Naive thymus-derived CD4-positive, alpha-beta T cell (primary cell): ENCODE measurements at regions of chr9 and their contacts with region 1.

Region 1: GRCh38 chr9:89549031-89549644 is 51.2 kb upstream of the SEMA4D start:
- DNase-seq: peak; percentile 70 to 87 (median 81)
- ATAC-seq: peak; percentile 100
- H3K4me3 ChIP-seq: no peak overlapping the region
- H3K4me3 Mint-ChIP-seq: peak overlapping the region in 7 of 10 donors; percentile 18 to 66 (median 55)
- H3K27ac ChIP-seq: peak overlapping the region; percentile 38
- H3K27ac Mint-ChIP-seq: peak overlapping the region in 7 of 9 donors; percentile 27 to 88 (median 74)
- H3K4me1 ChIP-seq: peaks cover 11 to 22% of the 10 kb centered on the region in 2 donors
- H3K4me1 Mint-ChIP-seq: peaks cover 13 to 42% (median 31%) of the 10 kb centered on the region in 7 donors
- H3K27me3 ChIP-seq: no peaks in the 10 kb centered on the region
- H3K27me3 Mint-ChIP-seq: peaks cover 0 to 21% (median 0%) of the 10 kb centered on the region in 5 donors

Region 2: DNA sequence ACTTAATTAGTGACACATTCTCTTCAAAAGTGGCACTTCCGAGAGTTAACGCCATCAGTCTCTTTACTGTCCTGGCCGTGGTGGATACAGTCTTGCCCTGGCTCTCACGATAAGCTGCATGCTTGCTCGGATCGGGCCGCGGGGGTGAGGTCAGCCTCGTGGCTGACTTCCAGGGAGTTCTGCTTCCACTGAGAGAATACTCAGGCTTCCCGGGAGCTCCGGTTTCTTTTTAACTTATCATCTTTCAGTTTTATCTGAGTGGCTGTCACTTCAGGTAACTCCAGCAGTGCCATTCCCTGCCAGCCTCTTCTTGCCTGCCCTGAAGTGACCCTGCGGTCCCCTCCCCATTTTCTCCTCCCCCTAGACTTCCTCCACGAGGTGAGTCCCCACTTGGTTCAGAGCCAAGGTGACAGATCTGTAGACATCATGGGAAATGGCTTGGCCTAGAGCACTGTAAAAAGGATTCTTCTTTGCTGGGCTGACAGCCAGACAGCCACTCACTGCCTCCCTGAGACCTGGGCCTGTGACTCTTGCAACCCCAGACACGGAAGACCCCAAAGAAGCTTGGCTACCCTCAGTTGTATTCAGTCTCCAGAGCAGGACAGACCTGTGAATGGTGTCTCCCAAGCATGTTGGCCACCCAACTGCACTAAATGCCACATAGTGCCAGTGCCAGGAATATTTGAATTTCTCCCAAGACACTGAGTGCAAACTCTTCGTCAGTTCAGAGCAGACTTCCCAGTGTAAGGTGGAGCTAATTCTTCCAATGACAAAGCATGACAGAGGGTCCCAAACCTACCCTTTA is 1956.4 kb before region 1 on chr9:
- CTCF ChIA-PET with region 1: no interaction called
- POLR2A ChIA-PET with region 1: no interaction called
- intact Hi-C with region 1: no loop called
- DNase-seq: no peak
- ATAC-seq: no peak
- H3K4me3 ChIP-seq: no peak overlapping the region
- H3K4me3 Mint-ChIP-seq: no peak overlapping the region
- H3K27ac ChIP-seq: no peak overlapping the region
- H3K27ac Mint-ChIP-seq: no peak overlapping the region
- H3K4me1 ChIP-seq: no peaks in the 10 kb centered on the region
- H3K4me1 Mint-ChIP-seq: peaks cover 0 to 2% (median 0%) of the 10 kb centered on the region in 7 donors
- H3K27me3 ChIP-seq: no peaks in the 10 kb centered on the region
- H3K27me3 Mint-ChIP-seq: peaks cover 0 to 9% (median 2%) of the 10 kb centered on the region in 5 donors

Region 3: GRCh38 chr9:89410641-89411350 is 138.3 kb before region 1 on chr9:
- CTCF ChIA-PET with region 1: interaction called, 19 read pairs
- POLR2A ChIA-PET with region 1: interaction called, 18 read pairs
- intact Hi-C with region 1: loop called (anchors 1 kb)
- DNase-seq: peak in 2 of 9 donors; percentile 29 to 60
- ATAC-seq: peak; percentile 37
- H3K4me3 ChIP-seq: no peak overlapping the region
- H3K4me3 Mint-ChIP-seq: peak overlapping the region in 9 of 10 donors; percentile 7 to 85 (median 54)
- H3K27ac ChIP-seq: peak overlapping the region; percentile 20
- H3K27ac Mint-ChIP-seq: peak overlapping the region; percentile 67 to 93 (median 84)
- H3K4me1 ChIP-seq: peaks cover 57 to 62% of the 10 kb centered on the region in 2 donors
- H3K4me1 Mint-ChIP-seq: peaks cover 56 to 100% (median 93%) of the 10 kb centered on the region in 7 donors
- H3K27me3 ChIP-seq: no peaks in the 10 kb centered on the region
- H3K27me3 Mint-ChIP-seq: no peaks in the 10 kb centered on the region

Region 4: GRCh38 chr9:89449261-89449671 is 99.9 kb before region 1 on chr9:
- CTCF ChIA-PET with region 1: interaction called, 12 read pairs
- POLR2A ChIA-PET with region 1: interaction called, 12 read pairs
- intact Hi-C with region 1: no loop called
- DNase-seq: no peak
- ATAC-seq: no peak
- H3K4me3 ChIP-seq: peak overlapping the region; percentile 14
- H3K4me3 Mint-ChIP-seq: peak overlapping the region; percentile 79 to 88 (median 80)
- H3K27ac ChIP-seq: peak overlapping the region; percentile 60
- H3K27ac Mint-ChIP-seq: peak overlapping the region; percentile 81 to 99 (median 97)
- H3K4me1 ChIP-seq: peaks cover 62 to 93% of the 10 kb centered on the region in 2 donors
- H3K4me1 Mint-ChIP-seq: peaks cover 71 to 100% (median 90%) of the 10 kb centered on the region in 7 donors
- H3K27me3 ChIP-seq: no peaks in the 10 kb centered on the region
- H3K27me3 Mint-ChIP-seq: no peaks in the 10 kb centered on the region

Region 5: DNA sequence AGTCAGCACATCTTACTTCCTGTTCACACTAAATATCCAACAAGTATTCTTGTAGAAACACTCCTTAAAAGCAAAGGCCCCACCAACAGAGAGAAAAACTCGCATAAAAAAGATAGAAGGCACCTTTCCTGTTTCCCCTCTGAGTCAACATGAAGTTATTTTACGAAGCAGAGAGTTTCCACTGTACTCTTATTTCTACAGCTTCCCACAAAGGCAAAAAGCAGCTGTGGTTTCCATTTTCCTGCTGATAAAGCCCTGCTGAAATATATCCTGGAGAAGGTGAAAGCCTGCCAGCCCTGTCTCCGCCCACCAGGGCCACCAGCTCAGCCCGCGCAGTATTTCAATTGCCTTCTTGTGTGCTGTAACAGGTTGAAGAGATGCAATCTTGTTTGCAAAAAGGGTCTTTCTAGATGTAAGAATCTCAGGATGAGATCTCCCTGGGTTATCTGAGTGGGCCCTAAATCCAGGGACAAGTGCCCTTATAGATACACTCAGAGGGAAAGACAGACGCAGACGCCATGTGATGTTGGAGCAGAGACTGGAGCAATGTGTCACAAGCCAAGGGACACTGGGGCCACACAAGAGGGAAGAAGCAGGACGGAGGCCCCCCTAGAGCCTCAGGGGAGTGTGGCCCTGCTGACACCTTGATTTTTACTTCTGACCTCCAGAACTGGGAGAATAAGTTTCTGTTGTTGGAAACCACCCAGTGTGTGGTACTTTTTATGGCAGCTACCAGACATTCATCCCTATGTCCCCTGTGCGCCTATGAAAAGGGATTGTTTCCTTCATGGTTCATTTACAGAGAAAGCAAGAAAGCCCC is 71.1 kb before region 1 on chr9:
- CTCF ChIA-PET with region 1: interaction called, 17 read pairs
- POLR2A ChIA-PET with region 1: interaction called, 10 read pairs
- intact Hi-C with region 1: loop called in 1 of 2 experiments (anchors 2 kb)
- DNase-seq: peak in 8 of 9 donors; percentile 49 to 78 (median 66)
- ATAC-seq: peak; percentile 63
- H3K4me3 ChIP-seq: peak overlapping the region; percentile 49
- H3K4me3 Mint-ChIP-seq: peak overlapping the region; percentile 80 to 92 (median 87)
- H3K27ac ChIP-seq: peak overlapping the region; percentile 78
- H3K27ac Mint-ChIP-seq: peak overlapping the region; percentile 90 to 99 (median 95)
- H3K4me1 ChIP-seq: peaks cover 74 to 82% of the 10 kb centered on the region in 2 donors
- H3K4me1 Mint-ChIP-seq: peaks cover 76 to 96% (median 90%) of the 10 kb centered on the region in 7 donors
- H3K27me3 ChIP-seq: no peaks in the 10 kb centered on the region
- H3K27me3 Mint-ChIP-seq: no peaks in the 10 kb centered on the region

Region 6: DNA sequence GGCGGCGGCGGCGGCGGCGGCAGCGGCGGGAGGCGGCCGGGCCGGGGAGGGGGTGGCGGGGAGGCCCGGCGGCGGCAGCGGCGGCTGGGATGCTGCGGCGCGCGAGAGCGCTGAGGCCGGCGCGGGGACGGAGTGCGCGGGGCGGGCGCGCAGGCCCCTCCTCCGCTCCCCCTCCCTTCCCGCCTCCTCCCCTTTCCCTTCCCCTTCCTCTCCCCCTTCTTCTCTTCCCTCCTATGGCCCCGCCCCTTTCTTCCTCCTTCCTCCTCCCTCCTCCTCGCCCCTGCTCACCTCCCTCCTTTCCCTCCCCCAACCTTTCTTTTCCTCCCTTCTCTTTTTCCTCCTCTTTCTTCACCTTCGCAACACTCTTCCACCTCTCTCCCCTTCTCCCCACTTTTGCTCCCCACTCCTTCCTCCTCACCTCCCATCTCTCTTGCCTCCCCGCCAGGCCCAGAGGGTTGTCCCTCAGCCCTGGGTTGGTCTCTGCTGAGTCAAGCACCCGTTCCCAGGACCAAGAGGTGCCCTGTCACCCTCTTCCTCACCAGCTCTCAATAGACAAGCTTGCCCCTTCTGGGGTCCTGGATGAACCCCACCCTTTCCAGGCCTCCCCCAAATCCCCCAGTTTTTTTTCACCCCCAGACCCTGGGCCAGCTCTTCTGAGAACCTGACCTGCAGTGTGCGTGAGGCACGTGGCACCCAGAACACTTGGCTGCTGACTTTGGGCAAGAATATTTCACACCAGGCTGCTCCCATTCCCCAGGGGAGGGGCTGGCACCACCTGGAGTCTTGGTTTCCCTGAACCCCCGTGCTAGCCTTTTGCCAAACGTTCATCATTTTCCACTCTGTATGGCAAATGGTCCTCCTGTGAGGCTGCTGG is 50.9 kb before region 1 on chr9 and contains the start of gene SEMA4D:
- CTCF ChIA-PET with region 1: interaction called, 21 read pairs
- POLR2A ChIA-PET with region 1: interaction called, 11 read pairs
- intact Hi-C with region 1: loop called (anchors 1 kb)
- DNase-seq: peak in 2 of 9 donors; percentile 48 to 71
- ATAC-seq: peak; percentile 22
- H3K4me3 ChIP-seq: peak within 1 kb of the TSS; percentile 67
- H3K4me3 Mint-ChIP-seq: peak within 1 kb of the TSS; percentile 85 to 100 (median 98)
- H3K27ac ChIP-seq: peak within 1 kb of the TSS; percentile 76
- H3K27ac Mint-ChIP-seq: peak within 1 kb of the TSS; percentile 86 to 99 (median 94)
- H3K4me1 ChIP-seq: peaks cover 72 to 75% of the 10 kb centered on the region in 2 donors
- H3K4me1 Mint-ChIP-seq: peaks cover 72 to 90% (median 77%) of the 10 kb centered on the region in 7 donors
- H3K27me3 ChIP-seq: no peaks in the 10 kb centered on the region
- H3K27me3 Mint-ChIP-seq: no peaks in the 10 kb centered on the region
- total RNA-seq, gene SEMA4D: 389 to 465 (median 460) TPM

Region 7: GRCh38 chr9:89529243-89530035 is 19.7 kb before region 1 on chr9:
- CTCF ChIA-PET with region 1: interaction called, 24 read pairs
- POLR2A ChIA-PET with region 1: interaction called, 13 read pairs
- intact Hi-C with region 1: loop called in 1 of 2 experiments (anchors 2 kb)
- DNase-seq: peak in 6 of 9 donors; percentile 38 to 67 (median 56)
- ATAC-seq: peak; percentile 75
- H3K4me3 ChIP-seq: peak overlapping the region; percentile 25
- H3K4me3 Mint-ChIP-seq: peak overlapping the region; percentile 53 to 90 (median 72)
- H3K27ac ChIP-seq: peak overlapping the region; percentile 50
- H3K27ac Mint-ChIP-seq: peak overlapping the region; percentile 82 to 100 (median 96)
- H3K4me1 ChIP-seq: peaks cover 88 to 98% of the 10 kb centered on the region in 2 donors
- H3K4me1 Mint-ChIP-seq: peaks cover 90 to 100% (median 100%) of the 10 kb centered on the region in 7 donors
- H3K27me3 ChIP-seq: no peaks in the 10 kb centered on the region
- H3K27me3 Mint-ChIP-seq: no peaks in the 10 kb centered on the region

Region 8: GRCh38 chr9:90064971-90065370 is 515.8 kb after region 1 on chr9:
- CTCF ChIA-PET with region 1: no interaction called
- POLR2A ChIA-PET with region 1: no interaction called
- intact Hi-C with region 1: no loop called
- DNase-seq: no peak
- ATAC-seq: no peak
- H3K4me3 ChIP-seq: no peak overlapping the region
- H3K4me3 Mint-ChIP-seq: no peak overlapping the region
- H3K27ac ChIP-seq: no peak overlapping the region
- H3K27ac Mint-ChIP-seq: no peak overlapping the region
- H3K4me1 ChIP-seq: no peaks in the 10 kb centered on the region
- H3K4me1 Mint-ChIP-seq: no peaks in the 10 kb centered on the region
- H3K27me3 ChIP-seq: peaks cover 0 to 6% of the 10 kb centered on the region in 2 donors
- H3K27me3 Mint-ChIP-seq: peaks cover 0 to 34% (median 17%) of the 10 kb centered on the region in 5 donors